CD4-positive, alpha-beta memory T cell (primary cell): ENCODE measurements at regions of chr20 and their contacts with region 1.

Region 1: GRCh38 chr20:43590392-43591323 is at the start of gene IFT52:
- DNase-seq: peak; percentile 85 to 89 (median 88)
- H3K4me3 ChIP-seq: peak within 1 kb of the TSS; percentile 75 to 90
- H3K4me3 Mint-ChIP-seq: peak within 1 kb of the TSS; percentile 88 to 96 (median 94)
- H3K27ac ChIP-seq: peak within 1 kb of the TSS; percentile 71
- H3K27ac Mint-ChIP-seq: peak within 1 kb of the TSS; percentile 93 to 99 (median 97)
- H3K4me1 ChIP-seq: peaks cover 18% of the 10 kb centered on the region
- H3K4me1 Mint-ChIP-seq: peaks cover 7 to 22% (median 15%) of the 10 kb centered on the region in 4 donors
- H3K27me3 ChIP-seq: no peaks in the 10 kb centered on the region
- H3K27me3 Mint-ChIP-seq: peaks cover 2 to 6% of the 10 kb centered on the region in 2 donors
- total RNA-seq, gene IFT52: 13.3 to 18.2 TPM

Region 2: GRCh38 chr20:43514062-43514999 is 76.3 kb before region 1 on chr20:
- CTCF ChIA-PET with region 1: no interaction called
- POLR2A ChIA-PET with region 1: interaction called, 6 read pairs
- intact Hi-C with region 1: loop called (anchors 1 kb)
- DNase-seq: peak; percentile 88 to 96 (median 92)
- H3K4me3 ChIP-seq: peak overlapping the region in 1 of 2 donors; percentile 66
- H3K4me3 Mint-ChIP-seq: peak overlapping the region; percentile 89 to 96 (median 92)
- H3K27ac ChIP-seq: peak overlapping the region; percentile 50
- H3K27ac Mint-ChIP-seq: peak overlapping the region; percentile 73 to 94 (median 91)
- H3K4me1 ChIP-seq: peaks cover 12% of the 10 kb centered on the region
- H3K4me1 Mint-ChIP-seq: peaks cover 6 to 24% (median 13%) of the 10 kb centered on the region in 4 donors
- H3K27me3 ChIP-seq: no peaks in the 10 kb centered on the region
- H3K27me3 Mint-ChIP-seq: peaks cover 0 to 3% of the 10 kb centered on the region in 2 donors